Activated T-helper 1 cell treated with anti-CD3 and anti-CD28 coated beads, Interleukin-12 subunit alpha, Interleukin-12 subunit beta, Interleukin-2, Interleukin-4 antibody, amounts not matched to agents 30 ng/mL and 10 ng/mL and 1 ng/mL, durations not matched to agents 14 hours and 24 hours and 36 hours (primary cell): ENCODE measurements at regions of chr3 and their contacts with region 1.

Region 1: GRCh38 chr3:183555541-183556081 is at the start of gene KLHL6:
- DNase-seq: peak; percentile 71
- H3K4me3 Mint-ChIP-seq: peak within 1 kb of the TSS; percentile 97
- H3K27ac Mint-ChIP-seq: peak within 1 kb of the TSS; percentile 100
- H3K4me1 Mint-ChIP-seq: peaks cover 57% of the 10 kb centered on the region
- H3K27me3 Mint-ChIP-seq: no peaks in the 10 kb centered on the region
- total RNA-seq, gene KLHL6: 38.6 and 40.6 TPM in 2 replicates

Region 2: DNA sequence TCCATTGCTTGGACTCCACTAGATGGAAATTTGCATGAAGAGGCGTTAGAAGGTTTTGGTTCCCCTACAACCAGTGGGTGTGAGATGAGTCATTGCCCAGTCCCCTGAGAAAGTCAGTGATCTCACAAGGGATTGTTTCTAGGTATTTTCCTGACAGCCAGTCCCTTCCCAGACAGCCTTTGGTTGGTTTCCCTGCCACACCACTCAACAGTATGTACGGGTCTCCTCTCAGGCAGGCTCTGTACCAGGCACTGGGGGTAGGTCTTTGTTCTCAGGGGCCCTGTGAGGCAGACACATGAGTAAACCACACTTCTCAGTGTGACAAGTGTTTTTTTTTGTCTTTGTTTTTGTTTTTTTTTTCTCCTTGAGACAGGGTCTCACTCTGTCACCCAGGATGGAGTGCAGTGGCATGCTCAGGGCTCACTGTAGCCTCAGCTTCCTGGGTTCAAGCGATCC is 397.0 kb before region 1 on chr3:
- intact Hi-C with region 1: loop called (anchors 1 kb)
- DNase-seq: peak; percentile 33
- H3K4me3 Mint-ChIP-seq: peak overlapping the region; percentile 45
- H3K27ac Mint-ChIP-seq: peak overlapping the region; percentile 73
- H3K4me1 Mint-ChIP-seq: peaks cover 48% of the 10 kb centered on the region
- H3K27me3 Mint-ChIP-seq: no peaks in the 10 kb centered on the region

Region 3: DNA sequence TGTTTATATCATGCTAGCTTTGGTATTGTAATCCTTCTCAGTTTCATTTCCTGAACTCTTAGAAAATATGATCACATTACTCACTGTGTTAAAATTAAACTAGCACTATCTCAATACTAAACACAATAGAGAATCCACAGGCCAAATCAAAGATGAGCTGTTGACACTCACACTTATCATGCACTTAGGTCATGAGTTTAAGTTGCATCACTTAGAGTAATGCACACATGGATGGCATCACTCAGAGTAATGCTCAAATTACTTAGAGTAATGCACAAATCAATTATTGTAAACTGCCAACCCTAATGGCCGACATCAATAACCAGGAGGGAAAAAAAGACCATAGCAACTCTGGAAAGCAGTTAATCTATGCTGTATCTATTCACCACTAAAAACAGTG is 87.2 kb before region 1 on chr3:
- intact Hi-C with region 1: loop called (anchors 1 kb)
- DNase-seq: no peak
- H3K4me3 Mint-ChIP-seq: peak overlapping the region; percentile 12
- H3K27ac Mint-ChIP-seq: peak overlapping the region; percentile 75
- H3K4me1 Mint-ChIP-seq: peaks cover 16% of the 10 kb centered on the region
- H3K27me3 Mint-ChIP-seq: peaks cover 2% of the 10 kb centered on the region

Region 4: DNA sequence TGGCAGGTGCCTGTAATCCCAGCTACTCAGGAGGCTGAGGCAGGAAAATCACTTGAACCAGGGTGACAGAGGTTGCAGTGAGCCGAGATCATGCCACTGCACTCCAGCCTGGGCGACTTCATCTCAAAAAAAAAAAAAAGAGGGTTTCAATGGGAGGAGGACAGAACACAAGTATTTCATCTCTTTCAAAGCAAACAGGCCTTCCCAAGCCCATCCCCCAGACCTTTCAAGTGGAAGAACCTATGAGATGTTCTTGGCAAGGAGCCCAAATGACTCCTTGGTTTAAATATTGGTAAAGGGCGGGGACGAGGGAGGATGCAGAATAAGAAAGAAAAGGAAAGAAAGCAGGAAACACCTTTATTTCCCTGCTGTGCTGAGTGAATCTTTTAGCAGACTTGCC is 64.9 kb before region 1 on chr3:
- intact Hi-C with region 1: no loop called
- DNase-seq: no peak
- H3K4me3 Mint-ChIP-seq: no peak overlapping the region
- H3K27ac Mint-ChIP-seq: no peak overlapping the region
- H3K4me1 Mint-ChIP-seq: peaks cover under 1% of the 10 kb centered on the region
- H3K27me3 Mint-ChIP-seq: no peaks in the 10 kb centered on the region

Region 5: DNA sequence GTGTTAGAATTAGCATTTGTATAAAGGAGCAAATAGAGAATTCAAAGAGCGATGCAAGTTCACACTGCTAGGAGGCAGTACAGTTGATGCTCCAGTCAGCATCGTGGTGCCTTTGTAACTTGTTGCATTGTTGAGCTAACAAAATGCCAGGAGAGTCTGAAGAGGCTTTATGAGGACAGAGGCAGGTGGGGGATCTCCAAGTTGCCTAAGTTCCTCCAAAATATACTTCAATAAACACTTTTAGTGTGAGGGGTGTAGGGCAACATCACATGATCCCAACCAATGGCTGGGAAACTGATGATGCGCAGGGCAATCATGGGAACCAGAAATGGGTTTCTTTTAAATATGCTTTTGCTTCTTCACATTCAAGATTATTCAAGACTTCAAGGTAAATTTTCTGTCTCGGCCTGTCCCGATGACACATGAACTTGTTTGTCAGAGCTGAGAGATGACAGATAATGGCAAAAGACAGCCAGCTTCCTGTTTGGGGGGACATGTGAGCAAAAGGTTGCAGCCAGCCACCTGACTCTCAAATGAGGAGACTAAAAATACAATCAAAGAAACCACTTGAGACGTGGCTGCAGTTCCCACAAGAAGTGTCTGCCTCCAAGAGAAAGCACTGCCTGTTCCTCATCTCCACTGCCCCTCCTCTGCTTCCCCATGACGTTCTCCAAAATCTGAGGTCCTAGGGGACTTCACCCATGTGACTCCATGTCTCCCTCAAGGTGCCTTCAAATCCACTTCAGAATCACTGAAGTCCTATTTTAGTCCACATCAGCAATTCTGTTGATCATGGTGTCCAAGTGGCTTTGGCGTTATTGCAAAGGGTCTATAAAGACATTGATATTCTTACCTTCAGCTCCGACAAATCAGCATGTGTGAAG is 39.4 kb before region 1 on chr3:
- intact Hi-C with region 1: loop called (anchors 1 kb)
- DNase-seq: peak; percentile 58
- H3K4me3 Mint-ChIP-seq: peak overlapping the region; percentile 34
- H3K27ac Mint-ChIP-seq: peak overlapping the region; percentile 82
- H3K4me1 Mint-ChIP-seq: peaks cover 77% of the 10 kb centered on the region
- H3K27me3 Mint-ChIP-seq: no peaks in the 10 kb centered on the region

Region 6: GRCh38 chr3:183540501-183541234 is 14.9 kb before region 1 on chr3:
- intact Hi-C with region 1: loop called (anchors 2 kb)
- DNase-seq: no peak
- H3K4me3 Mint-ChIP-seq: peak overlapping the region; percentile 35
- H3K27ac Mint-ChIP-seq: peak overlapping the region; percentile 84
- H3K4me1 Mint-ChIP-seq: peaks cover 78% of the 10 kb centered on the region
- H3K27me3 Mint-ChIP-seq: no peaks in the 10 kb centered on the region

Region 7: DNA sequence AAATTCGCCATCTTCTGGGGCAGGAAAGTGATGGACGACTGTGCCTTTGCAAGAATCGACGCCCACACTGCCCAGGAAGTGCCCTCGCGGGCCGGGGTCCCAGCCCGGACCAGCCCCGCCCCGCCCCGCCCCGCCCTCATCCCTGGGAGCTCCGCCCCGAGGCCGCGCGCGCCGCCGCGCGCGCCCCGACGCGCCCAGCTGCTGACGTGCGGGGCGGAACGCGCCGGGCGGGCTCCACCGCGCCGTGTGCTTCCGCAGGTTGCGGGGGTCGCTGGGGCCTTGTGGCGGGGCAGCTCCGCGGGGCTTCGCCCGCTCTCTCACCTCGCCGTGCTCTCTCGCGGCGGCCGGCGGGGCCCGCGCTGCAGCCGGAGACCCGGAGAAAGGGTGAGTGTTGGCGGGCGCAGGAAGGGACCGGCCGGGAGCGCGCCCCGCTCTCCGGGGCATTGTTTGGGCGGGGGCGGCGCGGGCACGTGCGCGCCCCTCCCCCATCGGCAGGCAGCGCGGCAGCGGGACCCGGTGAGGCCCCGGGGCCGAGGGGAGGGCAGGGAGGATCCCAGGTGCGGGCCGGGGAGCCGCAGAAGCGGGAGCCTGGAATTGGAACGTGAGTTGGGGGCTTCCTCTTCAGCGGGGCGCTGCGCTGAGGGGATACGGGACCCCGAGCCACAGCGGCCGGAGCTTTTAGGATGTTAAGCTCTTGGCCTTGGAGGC is 142.2 kb after region 1 on chr3 and contains the start of gene YEATS2:
- intact Hi-C with region 1: loop called (anchors 1 kb)
- DNase-seq: peak; percentile 65
- H3K4me3 Mint-ChIP-seq: peak within 1 kb of the TSS; percentile 88
- H3K27ac Mint-ChIP-seq: peak within 1 kb of the TSS; percentile 94
- H3K4me1 Mint-ChIP-seq: peaks cover 37% of the 10 kb centered on the region
- H3K27me3 Mint-ChIP-seq: no peaks in the 10 kb centered on the region
- total RNA-seq, gene YEATS2: 54.2 and 57.4 TPM in 2 replicates